Vagina (tissue), 2 donors: ENCODE measurements at regions of chr10 and their contacts with region 1.

Region 1: GRCh38 chr10:77641788-77642397 is 4.3 kb upstream of the KCNMA1 start:
- DNase-seq: no peak
- H3K4me3 ChIP-seq: no peak overlapping the region
- H3K27ac ChIP-seq: no peak overlapping the region
- H3K4me1 ChIP-seq: peaks cover 4% of the 10 kb centered on the region
- H3K27me3 ChIP-seq: no peaks in the 10 kb centered on the region
- CTCF ChIP-seq: peak; percentile 64 to 85 (median 67)
- POLR2A ChIP-seq: no peak

Region 2: DNA sequence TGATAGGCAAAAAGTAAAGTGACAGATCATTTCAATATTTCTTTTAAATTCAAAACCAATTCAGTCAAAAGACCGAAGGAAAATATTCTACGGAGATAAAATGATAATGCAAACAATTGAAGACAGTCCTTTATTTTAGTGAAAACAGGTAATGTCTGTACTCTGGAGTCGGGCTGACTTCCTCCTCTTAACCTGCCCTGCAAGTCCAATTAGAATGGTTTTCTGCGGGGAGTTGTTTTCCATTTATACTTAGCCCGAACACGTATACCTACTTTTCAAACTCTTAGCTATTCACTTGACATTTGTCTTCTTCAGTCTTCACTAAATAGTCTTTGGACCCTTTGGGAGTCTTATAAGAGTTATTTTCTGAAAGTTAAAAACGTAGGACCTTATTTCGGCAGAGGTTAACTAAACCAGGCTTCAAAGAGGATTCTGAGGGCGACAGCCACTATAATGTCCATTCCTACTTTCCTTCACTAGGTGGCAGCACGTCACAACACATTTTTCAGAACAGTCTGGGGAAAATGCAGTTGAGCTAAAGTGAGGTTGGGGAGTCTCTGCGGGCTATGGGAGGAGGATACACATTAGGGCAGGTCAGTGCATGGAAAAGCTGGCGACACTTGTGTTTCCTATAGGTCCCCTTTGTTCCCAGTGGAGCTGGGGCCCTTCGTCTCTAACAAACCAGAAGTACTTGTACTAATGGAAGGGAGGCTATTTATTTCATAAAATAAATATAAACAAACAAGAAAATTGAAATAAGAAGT is 476.3 kb before region 1 on chr10:
- intact Hi-C with region 1: loop called (anchors 5 kb)
- DNase-seq: no peak
- H3K4me3 ChIP-seq: no peak overlapping the region
- H3K27ac ChIP-seq: no peak overlapping the region
- H3K4me1 ChIP-seq: peaks cover 44% of the 10 kb centered on the region
- H3K27me3 ChIP-seq: no peaks in the 10 kb centered on the region
- CTCF ChIP-seq: peak; percentile 48 to 76 (median 69)
- POLR2A ChIP-seq: no peak

Region 3: GRCh38 chr10:77391605-77392235 is 250.2 kb before region 1 on chr10:
- intact Hi-C with region 1: loop called (anchors 2 kb)
- DNase-seq: no peak
- H3K4me3 ChIP-seq: no peak overlapping the region
- H3K27ac ChIP-seq: peak overlapping the region; percentile 71
- H3K4me1 ChIP-seq: peaks cover 42% of the 10 kb centered on the region
- H3K27me3 ChIP-seq: no peaks in the 10 kb centered on the region
- CTCF ChIP-seq: peak; percentile 26 to 54 (median 34)
- POLR2A ChIP-seq: no peak

Region 4: GRCh38 chr10:77405771-77406241 is 236.1 kb before region 1 on chr10:
- intact Hi-C with region 1: loop called (anchors 5 kb)
- DNase-seq: no peak
- H3K4me3 ChIP-seq: no peak overlapping the region
- H3K27ac ChIP-seq: peak overlapping the region; percentile 46
- H3K4me1 ChIP-seq: peaks cover 27% of the 10 kb centered on the region
- H3K27me3 ChIP-seq: no peaks in the 10 kb centered on the region
- CTCF ChIP-seq: no peak
- POLR2A ChIP-seq: no peak